ENCODE measurements at regions of chr1 and their contacts with region 1.

Region 1: GRCh38 chr1:230642263-230642959 is at the start of gene COG2:
- DNase-seq: peak; percentile 88 to 97 (median 94)
- H3K4me3 ChIP-seq: peak within 1 kb of the TSS; percentile 54 to 99 (median 88)
- H3K27ac ChIP-seq: peak within 1 kb of the TSS; percentile 31 to 96 (median 89)
- H3K27me3 ChIP-seq: no peaks in the 10 kb centered on the region
- CTCF ChIP-seq: peak; percentile 99 to 100 (median 100)
- total RNA-seq, gene COG2: 23.2 to 41.1 (median 30.6) TPM

Region 2: DNA sequence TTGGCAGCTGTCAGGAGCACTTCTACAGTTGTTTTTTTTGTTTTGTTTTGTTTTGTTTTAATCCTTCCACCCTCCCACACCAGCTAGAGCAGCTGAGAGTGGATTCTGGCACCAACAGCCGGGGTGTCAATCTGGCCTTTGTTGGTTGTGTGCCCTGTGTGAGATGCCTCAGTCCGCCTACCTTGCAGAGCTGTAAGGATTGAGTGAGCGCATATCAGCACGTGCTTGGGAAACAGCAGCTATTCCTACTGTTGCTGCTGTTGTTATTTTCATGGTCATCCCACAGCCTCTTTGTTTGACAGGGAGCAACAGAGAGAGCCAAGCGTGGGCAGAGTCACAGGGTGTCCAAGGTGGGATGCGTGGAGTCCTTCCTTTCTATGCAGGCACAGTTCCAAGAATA is 266.6 kb before region 1 on chr1:
- intact Hi-C with region 1: loop called in 1 of 2 experiments (anchors 5 kb)
- DNase-seq: peak in 7 of 10 donors; percentile 57 to 78 (median 65)
- H3K4me3 ChIP-seq: peak overlapping the region in 12 of 59 donors; percentile 4 to 42 (median 13)
- H3K27ac ChIP-seq: peak overlapping the region; percentile 51 to 97 (median 88)
- H3K27me3 ChIP-seq: no peaks in the 10 kb centered on the region
- CTCF ChIP-seq: no peak

Region 3: GRCh38 chr1:230681599-230681998 is 39.2 kb after region 1 on chr1:
- intact Hi-C with region 1: loop called (anchors 5 kb)
- DNase-seq: no peak
- H3K4me3 ChIP-seq: no peak overlapping the region
- H3K27ac ChIP-seq: peak overlapping the region in 57 of 59 donors; percentile 32 to 94 (median 81)
- H3K27me3 ChIP-seq: no peaks in the 10 kb centered on the region
- CTCF ChIP-seq: no peak

Region 4: DNA sequence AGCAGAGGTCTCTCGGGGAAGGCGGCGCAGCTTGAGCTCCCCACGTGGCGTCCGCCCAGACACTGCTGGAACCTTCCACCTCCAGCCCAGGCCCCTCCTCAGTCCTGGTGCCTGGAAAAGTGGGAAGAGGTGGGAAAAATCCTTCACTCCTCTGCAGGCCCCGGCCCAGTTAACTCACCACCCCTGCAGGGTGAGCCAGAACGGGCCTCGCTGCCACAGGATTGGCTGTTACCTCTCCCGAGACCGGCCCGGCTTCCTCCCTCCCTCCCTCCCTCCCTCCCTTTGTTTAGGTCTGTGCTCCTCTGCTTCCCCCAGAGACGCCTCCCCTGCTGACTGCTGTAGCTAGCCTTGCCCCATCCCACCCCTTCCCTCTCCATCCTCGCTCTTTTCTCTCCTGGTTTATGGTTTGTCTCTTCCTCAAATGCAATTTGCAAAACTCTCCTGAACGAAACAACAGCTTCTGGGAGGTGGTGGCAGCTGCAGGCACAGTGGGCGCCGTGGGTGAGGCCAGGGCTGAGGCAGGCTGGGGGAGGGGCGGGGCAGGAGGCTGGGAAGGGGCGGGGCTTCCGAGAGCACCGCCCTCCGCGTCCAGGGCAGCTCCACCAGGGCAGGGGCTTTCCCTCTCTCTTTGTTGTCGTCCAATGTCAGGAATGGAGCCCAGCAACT is 111.3 kb after region 1 on chr1:
- intact Hi-C with region 1: loop called (anchors 5 kb)
- DNase-seq: peak in 2 of 10 donors; percentile 40 to 43
- H3K4me3 ChIP-seq: peak overlapping the region in 29 of 59 donors; percentile 3 to 51 (median 23)
- H3K27ac ChIP-seq: peak overlapping the region; percentile 86 to 100 (median 95)
- H3K27me3 ChIP-seq: no peaks in the 10 kb centered on the region
- CTCF ChIP-seq: peak in 1 of 56 donors; percentile 14

Region 5: DNA sequence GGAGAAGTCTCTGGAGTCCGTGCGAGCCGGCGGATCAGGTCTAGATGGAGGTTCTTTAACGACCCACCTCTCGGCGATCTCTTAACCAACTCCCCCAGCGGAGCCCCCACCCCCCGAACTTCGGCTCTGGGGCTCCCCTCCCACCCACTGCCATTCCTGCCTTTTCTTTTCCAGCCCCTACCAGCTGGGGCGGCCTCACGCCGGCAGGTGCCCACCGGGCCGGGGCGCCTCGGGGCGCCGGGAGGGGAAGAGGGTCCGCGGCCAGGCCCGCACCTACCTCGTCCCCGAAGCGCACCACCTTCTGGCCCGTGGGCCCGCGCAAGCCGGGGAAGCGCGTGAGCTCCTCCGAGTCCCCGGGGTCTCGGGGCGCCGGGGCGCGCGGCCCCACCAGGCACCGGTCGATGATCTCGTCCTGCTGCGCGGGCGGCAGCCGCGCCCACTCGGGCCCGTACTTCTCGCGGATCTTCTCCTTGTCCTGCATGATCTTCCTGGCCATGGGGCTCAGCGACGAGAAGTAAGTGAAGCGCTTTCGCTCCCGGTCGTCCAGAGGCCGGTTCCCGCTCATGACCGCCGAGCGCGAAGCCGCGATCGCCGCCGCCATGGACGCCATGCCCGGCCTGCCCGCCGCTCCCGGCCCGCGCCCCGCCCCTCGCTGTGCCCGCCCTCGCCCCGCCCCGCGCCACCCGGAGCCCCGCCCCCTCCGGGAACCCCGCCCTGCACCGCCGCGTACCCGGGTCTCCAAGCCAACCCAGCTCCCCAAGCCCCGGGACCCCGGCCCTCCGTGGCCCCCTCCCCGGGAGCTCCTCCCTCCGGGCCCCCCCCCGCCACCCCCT is 225.7 kb after region 1 on chr1 and contains the start of gene C1orf198:
- intact Hi-C with region 1: loop called in 1 of 2 experiments (anchors 10 kb)
- DNase-seq: peak; percentile 63 to 86 (median 76)
- H3K4me3 ChIP-seq: peak within 1 kb of the TSS; percentile 48 to 99 (median 90)
- H3K27ac ChIP-seq: peak within 1 kb of the TSS; percentile 46 to 97 (median 93)
- H3K27me3 ChIP-seq: no peaks in the 10 kb centered on the region
- CTCF ChIP-seq: peak in 1 of 56 donors; percentile 21
- total RNA-seq, gene C1orf198: 43.1 to 244 (median 83.2) TPM

Region 6: DNA sequence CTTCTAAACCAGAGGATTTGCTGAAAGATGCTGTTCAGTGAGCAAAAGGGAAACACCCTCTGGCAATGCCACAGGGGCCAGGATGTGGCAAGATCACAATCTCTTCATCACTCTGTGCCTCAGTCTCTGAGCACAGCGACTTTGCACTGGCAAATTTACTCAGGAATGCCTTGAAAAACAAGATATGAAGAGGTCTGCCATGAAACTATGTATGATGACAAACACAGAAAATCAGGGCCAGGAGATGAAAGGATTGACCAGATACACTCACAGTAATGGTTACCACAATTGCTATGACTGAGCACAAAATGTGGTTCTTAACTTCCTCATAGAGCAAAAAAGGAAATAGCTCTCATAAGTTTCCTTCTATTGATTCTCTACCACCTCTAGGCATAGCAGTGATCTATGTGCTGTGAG is 330.5 kb after region 1 on chr1:
- intact Hi-C with region 1: no loop called
- DNase-seq: no peak
- H3K4me3 ChIP-seq: no peak overlapping the region
- H3K27ac ChIP-seq: peak overlapping the region in 2 of 59 donors; percentile 23 to 32
- H3K27me3 ChIP-seq: no peaks in the 10 kb centered on the region
- CTCF ChIP-seq: no peak

Region 7: DNA sequence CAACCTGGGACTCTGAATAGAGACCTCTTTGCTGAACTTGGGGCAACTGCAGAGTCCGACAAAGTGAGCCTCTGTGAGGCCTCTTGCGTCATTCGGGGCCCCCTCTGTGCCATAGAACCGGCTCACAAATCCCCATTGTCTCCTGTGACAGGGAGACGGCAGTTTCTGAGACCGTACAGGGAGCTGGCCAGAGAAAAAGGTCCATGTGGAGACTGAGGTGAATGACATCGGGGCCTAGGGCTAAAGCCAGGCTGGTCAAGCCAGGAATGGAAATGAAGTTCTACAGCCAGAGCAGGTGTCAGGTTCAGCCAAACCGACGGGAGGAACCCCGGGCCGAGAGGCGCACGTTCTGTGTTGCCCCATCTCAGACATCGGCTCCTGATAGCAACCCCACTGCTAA is 482.3 kb after region 1 on chr1:
- intact Hi-C with region 1: no loop called
- DNase-seq: peak in 7 of 10 donors; percentile 15 to 58 (median 54)
- H3K4me3 ChIP-seq: peak overlapping the region in 1 of 59 donors; percentile 3
- H3K27ac ChIP-seq: peak overlapping the region in 27 of 59 donors; percentile 4 to 77 (median 47)
- H3K27me3 ChIP-seq: peaks cover 0 to 7% (median 0%) of the 10 kb centered on the region in 45 donors
- CTCF ChIP-seq: no peak

Measured in dorsolateral prefrontal cortex (tissue), 120 donors.